ENCODE measurements at regions of chr11 and their contacts with region 1.

Region 1: DNA sequence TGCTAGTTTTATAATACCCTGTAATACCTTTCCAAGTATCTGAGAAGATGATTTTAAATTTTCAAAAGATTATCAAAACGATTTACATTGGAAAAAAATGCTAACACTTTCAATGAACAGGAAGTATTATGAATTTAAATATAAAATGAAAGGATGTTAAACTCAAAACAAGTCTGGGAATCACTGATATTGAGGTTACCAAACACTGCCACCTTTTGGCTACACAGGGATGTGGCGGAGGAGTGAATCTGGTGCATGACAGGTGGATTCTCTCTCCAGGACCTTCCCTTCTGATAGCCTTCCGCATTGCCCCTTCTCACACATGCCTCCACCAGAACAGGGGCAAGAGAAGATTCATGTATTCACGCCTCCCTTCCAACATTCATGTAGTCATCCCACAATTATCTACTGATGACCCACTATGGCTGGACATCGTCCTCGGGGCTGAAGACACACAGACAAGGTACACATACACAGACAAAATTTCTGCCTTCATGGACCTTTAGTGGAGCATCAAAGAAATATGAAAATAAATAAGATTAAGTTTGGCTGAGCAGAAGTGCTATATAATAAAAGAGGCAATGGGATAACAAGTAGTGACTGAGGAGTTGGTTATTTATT is 34.7 kb downstream of the ATG16L2 start:
- DNase-seq: peak in 12 of 14 experiments; percentile 23 to 72 (median 32)
- ATAC-seq: peak; percentile 64
- H3K4me3 ChIP-seq: no peak overlapping the region
- H3K4me3 Mint-ChIP-seq: no peak overlapping the region
- H3K27ac ChIP-seq: no peak overlapping the region
- H3K27ac Mint-ChIP-seq: peak overlapping the region; percentile 25
- H3K4me1 ChIP-seq: peaks cover 4% of the 10 kb centered on the region
- H3K4me1 Mint-ChIP-seq: peaks cover 12% of the 10 kb centered on the region
- H3K27me3 ChIP-seq: no peaks in the 10 kb centered on the region
- H3K27me3 Mint-ChIP-seq: no peaks in the 10 kb centered on the region
- CTCF ChIP-seq: peak; percentile 72

Region 2: DNA sequence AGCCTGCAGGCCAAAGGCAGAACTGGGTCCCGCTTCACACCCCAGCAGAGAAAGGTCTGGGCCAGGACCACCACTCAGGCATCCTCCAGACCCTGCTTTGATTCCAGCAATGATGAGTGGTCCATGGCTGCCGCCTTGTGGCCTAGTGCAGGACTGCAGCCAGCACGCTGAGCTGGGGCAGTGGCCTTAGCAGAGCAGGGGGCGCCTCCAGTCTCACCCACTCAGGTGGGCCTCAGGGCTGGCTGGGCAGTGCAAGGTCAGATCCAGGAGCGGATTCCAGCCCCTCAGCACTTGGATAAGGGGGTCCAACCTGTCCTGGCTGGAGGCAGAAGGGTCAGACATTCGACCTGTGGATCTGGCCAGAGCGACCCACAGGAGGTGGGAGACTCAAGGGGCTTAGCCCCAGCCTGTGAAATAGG is 165.2 kb before region 1 on chr11:
- CTCF ChIA-PET with region 1: no interaction called
- POLR2A ChIA-PET with region 1: no interaction called
- intact Hi-C with region 1: loop called in 1 of 2 experiments (anchors 5 kb)
- DNase-seq: peak; percentile 49 to 76 (median 60)
- ATAC-seq: peak; percentile 86
- H3K4me3 ChIP-seq: no peak overlapping the region
- H3K4me3 Mint-ChIP-seq: no peak overlapping the region
- H3K27ac ChIP-seq: no peak overlapping the region
- H3K27ac Mint-ChIP-seq: no peak overlapping the region
- H3K4me1 ChIP-seq: peaks cover 4% of the 10 kb centered on the region
- H3K4me1 Mint-ChIP-seq: peaks cover 12% of the 10 kb centered on the region
- H3K27me3 ChIP-seq: no peaks in the 10 kb centered on the region
- H3K27me3 Mint-ChIP-seq: no peaks in the 10 kb centered on the region
- CTCF ChIP-seq: peak; percentile 88

Region 3: DNA sequence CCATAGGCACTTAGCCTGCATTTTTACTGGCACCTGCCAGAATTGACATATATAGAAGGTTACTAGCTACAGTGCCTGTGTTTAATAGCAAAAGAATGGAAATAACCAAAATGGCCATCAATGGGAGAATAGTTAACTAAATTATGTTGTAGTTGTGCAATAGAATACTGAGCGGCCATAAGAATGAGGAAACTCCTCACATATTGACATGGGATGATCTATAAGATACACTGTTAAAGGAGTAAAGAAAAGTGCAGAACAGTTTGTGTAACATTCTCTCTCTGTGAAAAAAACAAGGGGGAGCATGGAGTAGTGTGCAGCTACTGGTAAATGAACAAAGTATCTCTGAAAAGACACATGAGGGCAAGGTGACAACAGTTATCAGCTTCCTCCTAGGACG is 118.2 kb before region 1 on chr11:
- CTCF ChIA-PET with region 1: interaction called, 11 read pairs
- POLR2A ChIA-PET with region 1: no interaction called
- intact Hi-C with region 1: loop called (anchors 1 kb)
- DNase-seq: no peak
- ATAC-seq: no peak
- H3K4me3 ChIP-seq: no peak overlapping the region
- H3K4me3 Mint-ChIP-seq: no peak overlapping the region
- H3K27ac ChIP-seq: no peak overlapping the region
- H3K27ac Mint-ChIP-seq: peak overlapping the region; percentile 32
- H3K4me1 ChIP-seq: peaks cover 3% of the 10 kb centered on the region
- H3K4me1 Mint-ChIP-seq: peaks cover 5% of the 10 kb centered on the region
- H3K27me3 ChIP-seq: no peaks in the 10 kb centered on the region
- H3K27me3 Mint-ChIP-seq: no peaks in the 10 kb centered on the region
- CTCF ChIP-seq: no peak

Region 4: DNA sequence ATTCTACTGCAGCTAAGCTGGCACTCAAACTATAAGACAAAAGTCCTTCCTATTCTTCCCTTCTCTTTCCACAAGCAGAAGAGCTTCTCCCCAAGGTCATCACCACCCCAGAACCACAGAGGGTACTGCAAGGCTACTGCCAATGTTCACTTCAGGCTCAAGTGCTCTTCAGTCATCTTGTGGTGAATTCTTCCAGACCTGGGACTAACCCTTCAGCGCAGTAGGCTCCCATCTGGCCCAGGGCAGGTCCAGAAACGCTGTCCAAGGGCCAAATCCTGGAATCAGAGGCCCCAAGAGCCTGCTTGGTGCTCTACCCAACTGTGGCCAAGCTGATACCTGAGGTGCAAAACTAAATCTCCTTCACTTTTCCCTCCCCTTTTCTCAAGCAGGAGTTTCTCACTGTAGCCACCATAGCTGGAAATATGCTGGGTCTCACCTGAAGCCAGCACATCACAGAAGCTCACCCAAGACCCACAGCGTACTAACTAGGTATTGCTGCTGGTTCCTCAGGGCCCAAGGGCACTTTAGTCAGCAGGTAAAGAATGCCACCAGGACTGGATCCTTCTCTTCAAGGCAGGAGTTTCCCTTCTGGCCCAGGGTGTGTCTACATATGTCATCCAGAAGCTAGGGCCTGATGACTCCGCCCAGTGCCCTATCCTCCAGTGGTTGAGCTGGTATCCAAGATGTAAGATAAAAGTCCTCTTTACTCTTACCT is 265.3 kb after region 1 on chr11:
- CTCF ChIA-PET with region 1: no interaction called
- POLR2A ChIA-PET with region 1: no interaction called
- intact Hi-C with region 1: no loop called
- DNase-seq: no peak
- ATAC-seq: no peak
- H3K4me3 ChIP-seq: no peak overlapping the region
- H3K4me3 Mint-ChIP-seq: no peak overlapping the region
- H3K27ac ChIP-seq: no peak overlapping the region
- H3K27ac Mint-ChIP-seq: no peak overlapping the region
- H3K4me1 ChIP-seq: no peaks in the 10 kb centered on the region
- H3K4me1 Mint-ChIP-seq: no peaks in the 10 kb centered on the region
- H3K27me3 ChIP-seq: no peaks in the 10 kb centered on the region
- H3K27me3 Mint-ChIP-seq: no peaks in the 10 kb centered on the region
- CTCF ChIP-seq: no peak